Activated CD4-positive, alpha-beta T cell treated with anti-CD3 and anti-CD28 coated beads, Interleukin-2, amount 10 ng/mL, durations not matched to agents 7 days and 5 days (primary cell): ENCODE measurements at regions of chr22 and their contacts with region 1.

Region 1: GRCh38 chr22:28800308-28801077 is at the start of gene XBP1:
- DNase-seq: peak; percentile 90
- H3K4me3 Mint-ChIP-seq: peak within 1 kb of the TSS; percentile 95
- H3K27ac Mint-ChIP-seq: peak within 1 kb of the TSS; percentile 100
- H3K4me1 Mint-ChIP-seq: peaks cover 51% of the 10 kb centered on the region
- H3K27me3 Mint-ChIP-seq: no peaks in the 10 kb centered on the region
- total RNA-seq, gene XBP1: 159 to 184 TPM

Region 2: DNA sequence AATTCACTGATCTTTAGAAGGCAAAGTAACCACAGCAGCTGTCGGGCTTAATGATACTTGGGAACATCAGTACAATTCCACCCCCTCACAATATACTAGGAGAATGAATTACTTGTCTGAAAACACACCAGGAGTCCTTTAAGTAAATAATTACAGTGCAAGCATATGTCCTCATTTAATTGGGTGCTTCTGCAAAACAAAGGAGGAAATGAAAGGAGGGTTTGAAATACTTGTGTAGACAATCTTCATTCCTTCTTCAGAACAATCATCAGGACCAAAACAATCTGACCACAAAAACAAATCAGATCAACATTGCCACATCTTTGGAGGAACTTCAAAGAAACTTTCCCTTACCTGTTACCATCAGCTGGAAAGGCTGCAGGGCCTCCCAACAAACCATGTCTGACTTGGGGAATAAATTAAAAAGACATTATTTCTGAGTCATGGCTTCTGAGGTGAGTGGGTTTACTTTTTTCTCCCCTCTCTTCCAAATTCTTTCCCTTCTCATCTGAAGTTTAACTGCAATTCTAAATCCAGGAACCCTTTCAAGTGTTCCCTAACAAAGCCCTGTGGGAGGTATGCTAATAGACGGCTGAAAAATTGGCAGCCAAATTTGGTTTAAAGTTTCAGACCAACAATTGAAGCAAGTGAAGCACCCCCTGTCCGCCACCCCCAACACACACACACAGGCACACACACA is 40.5 kb before region 1 on chr22:
- CTCF ChIA-PET with region 1: no interaction called
- POLR2A ChIA-PET with region 1: no interaction called
- DNase-seq: no peak
- H3K4me3 Mint-ChIP-seq: no peak overlapping the region
- H3K27ac Mint-ChIP-seq: no peak overlapping the region
- H3K4me1 Mint-ChIP-seq: peaks cover 4% of the 10 kb centered on the region
- H3K27me3 Mint-ChIP-seq: peaks cover 2% of the 10 kb centered on the region

Region 3: GRCh38 chr22:28810821-28811491 is 10.5 kb after region 1 on chr22:
- CTCF ChIA-PET with region 1: interaction called, 52 read pairs
- POLR2A ChIA-PET with region 1: interaction called, 28 read pairs
- DNase-seq: peak; percentile 65
- H3K4me3 Mint-ChIP-seq: peak overlapping the region; percentile 76
- H3K27ac Mint-ChIP-seq: peak overlapping the region; percentile 93
- H3K4me1 Mint-ChIP-seq: peaks cover 78% of the 10 kb centered on the region
- H3K27me3 Mint-ChIP-seq: no peaks in the 10 kb centered on the region

Region 4: DNA sequence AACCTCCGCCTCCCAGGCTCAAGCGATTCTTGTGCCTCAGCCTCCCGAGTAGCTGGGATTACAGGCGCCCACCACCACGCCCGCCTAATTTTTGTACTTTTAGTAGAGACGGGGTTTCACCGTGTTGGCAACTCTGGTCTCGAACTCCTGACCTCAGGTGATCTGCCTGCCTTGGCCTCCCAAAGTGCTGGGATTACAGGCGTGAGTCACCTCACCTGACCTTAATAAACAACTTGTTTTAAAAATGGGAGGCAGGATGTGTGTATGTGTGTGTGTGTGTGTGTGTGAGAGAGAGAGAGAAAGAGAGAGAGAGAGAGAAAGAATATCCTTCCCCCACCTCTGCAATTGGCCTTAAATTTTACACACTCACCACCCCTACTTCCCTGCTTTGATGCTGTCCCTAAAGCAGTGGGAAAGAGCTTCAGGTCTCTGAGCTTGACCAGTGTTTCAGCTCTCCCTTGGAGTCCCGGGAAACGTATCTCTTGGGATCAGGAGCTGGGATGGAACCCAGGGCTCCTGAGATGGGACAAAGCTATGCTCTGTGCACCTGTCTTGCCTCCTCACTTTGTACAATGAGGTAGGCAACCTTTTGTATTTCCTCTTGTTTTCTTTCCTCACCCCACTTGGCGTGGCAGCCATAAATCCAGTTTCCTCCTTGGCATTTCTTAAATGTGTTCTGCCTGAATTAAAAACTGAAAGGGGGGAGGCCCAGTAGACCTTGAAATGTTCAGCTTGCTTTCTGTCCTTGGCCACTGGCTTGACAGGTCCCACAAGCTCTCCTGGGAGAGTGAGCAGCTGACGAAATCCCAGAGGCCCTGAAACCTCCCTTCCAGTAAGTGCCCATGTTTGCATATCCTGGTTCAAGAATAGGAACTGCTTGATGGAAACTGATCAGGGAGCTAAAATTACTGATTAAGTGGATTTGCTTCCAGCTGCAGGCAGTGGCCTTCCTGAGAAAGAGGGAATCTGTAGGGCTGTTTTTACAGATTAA is 17.7 kb after region 1 on chr22:
- CTCF ChIA-PET with region 1: interaction called, 52 read pairs
- POLR2A ChIA-PET with region 1: no interaction called
- DNase-seq: no peak
- H3K4me3 Mint-ChIP-seq: peak overlapping the region; percentile 18
- H3K27ac Mint-ChIP-seq: peak overlapping the region; percentile 76
- H3K4me1 Mint-ChIP-seq: peaks cover 83% of the 10 kb centered on the region
- H3K27me3 Mint-ChIP-seq: no peaks in the 10 kb centered on the region